ENCODE measurements at regions of chr19 and their contacts with region 1.

Region 1: GRCh38 chr19:44002566-44003460 is at the start of gene ZNF230:
- DNase-seq: peak; percentile 91
- ATAC-seq: peak; percentile 100
- total RNA-seq, gene ZNF230: 2.7 TPM

Region 2: DNA sequence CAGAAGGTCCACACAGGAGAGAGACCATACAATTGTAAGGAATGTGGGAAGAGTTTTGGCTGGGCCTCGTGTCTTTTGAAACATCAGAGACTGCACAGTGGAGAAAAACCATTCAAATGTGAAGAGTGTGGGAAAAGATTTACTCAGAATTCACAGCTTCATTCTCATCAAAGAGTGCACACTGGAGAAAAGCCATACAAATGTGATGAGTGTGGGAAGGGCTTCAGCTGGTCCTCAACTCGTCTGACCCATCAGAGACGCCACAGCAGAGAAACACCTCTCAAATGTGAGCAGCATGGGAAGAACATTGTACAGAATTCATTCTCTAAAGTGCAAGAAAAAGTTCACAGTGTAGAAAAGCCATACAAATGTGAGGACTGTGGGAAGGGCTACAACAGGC is 104.9 kb after region 1 on chr19:
- intact Hi-C with region 1: loop called (anchors 10 kb)
- DNase-seq: no peak
- ATAC-seq: no peak

Measured in Right ventricle myocardium superior (tissue), 1 donor.